A673 (cell line): ENCODE measurements at regions of chr1 and their contacts with region 1.

Region 1: GRCh38 chr1:43513436-43514173 is 17.1 kb upstream of the PTPRF start:
- DNase-seq: no peak
- H3K4me3 ChIP-seq: no peak overlapping the region
- H3K27ac ChIP-seq: no peak overlapping the region
- H3K4me1 ChIP-seq: no peaks in the 10 kb centered on the region
- H3K27me3 ChIP-seq: no peaks in the 10 kb centered on the region
- CTCF ChIP-seq: no peak

Region 2: DNA sequence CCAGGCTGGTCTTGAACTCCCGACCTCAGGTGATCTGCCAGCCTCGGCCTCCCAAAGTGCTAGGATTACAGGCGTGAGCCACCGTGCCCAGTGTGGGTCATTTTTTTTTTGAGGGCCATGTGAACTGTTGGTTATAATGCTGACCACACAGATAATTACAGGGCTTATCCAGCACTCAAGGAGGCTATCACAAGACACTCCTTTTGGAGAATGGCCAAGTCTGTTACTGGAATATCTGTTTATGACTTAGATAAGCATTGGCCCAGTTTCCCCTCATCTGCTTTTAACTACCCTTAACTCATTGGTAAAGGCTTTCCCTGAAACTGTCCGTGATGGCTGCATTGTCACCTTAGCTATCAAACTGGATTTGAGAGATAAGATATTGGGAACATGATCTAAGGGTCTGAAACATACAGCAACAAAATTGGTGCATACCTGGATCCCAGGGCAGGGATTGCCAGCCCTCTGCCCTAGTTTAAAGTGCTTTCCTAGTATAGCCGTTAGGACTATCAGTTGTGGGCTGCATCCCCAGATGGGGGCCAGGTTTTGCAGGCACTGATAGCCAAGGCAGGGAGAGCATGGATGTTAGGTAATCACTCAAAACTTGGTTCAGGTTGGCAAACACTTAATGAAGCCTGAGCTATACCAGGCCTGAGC is 108.3 kb before region 1 on chr1:
- CTCF ChIA-PET with region 1: no interaction called
- POLR2A ChIA-PET with region 1: no interaction called
- intact Hi-C with region 1: no loop called
- DNase-seq: no peak
- H3K4me3 ChIP-seq: no peak overlapping the region
- H3K27ac ChIP-seq: no peak overlapping the region
- H3K4me1 ChIP-seq: no peaks in the 10 kb centered on the region
- H3K27me3 ChIP-seq: no peaks in the 10 kb centered on the region
- CTCF ChIP-seq: no peak

Region 3: DNA sequence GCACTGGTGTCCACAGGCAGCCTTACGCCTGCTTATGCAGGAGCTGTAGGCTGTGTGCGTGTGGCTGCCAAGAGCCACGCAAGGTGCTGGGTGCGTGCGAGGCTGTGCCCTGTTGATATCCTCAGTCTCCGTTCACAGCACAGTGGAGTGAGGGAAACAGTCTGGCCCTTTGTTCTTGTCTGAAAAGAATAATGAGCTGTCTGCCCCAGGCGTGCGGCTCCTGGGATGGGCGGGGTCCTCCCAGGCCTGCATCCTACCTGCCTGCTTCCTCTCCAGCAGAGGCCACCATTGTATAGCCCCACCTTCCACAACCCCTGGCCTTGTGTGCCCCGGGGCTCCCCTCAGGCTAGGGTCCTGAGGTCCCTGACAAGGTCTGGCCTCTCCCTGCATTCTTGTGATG is 89.4 kb after region 1 on chr1:
- CTCF ChIA-PET with region 1: no interaction called
- POLR2A ChIA-PET with region 1: no interaction called
- intact Hi-C with region 1: no loop called
- DNase-seq: no peak
- H3K4me3 ChIP-seq: no peak overlapping the region
- H3K27ac ChIP-seq: no peak overlapping the region
- H3K4me1 ChIP-seq: no peaks in the 10 kb centered on the region
- H3K27me3 ChIP-seq: no peaks in the 10 kb centered on the region
- CTCF ChIP-seq: no peak

Region 4: GRCh38 chr1:43671626-43672330 is 158.2 kb after region 1 on chr1:
- CTCF ChIA-PET with region 1: no interaction called
- POLR2A ChIA-PET with region 1: interaction called, 15 read pairs
- intact Hi-C with region 1: no loop called
- DNase-seq: no peak
- H3K4me3 ChIP-seq: no peak overlapping the region
- H3K27ac ChIP-seq: no peak overlapping the region
- H3K4me1 ChIP-seq: no peaks in the 10 kb centered on the region
- H3K27me3 ChIP-seq: no peaks in the 10 kb centered on the region
- CTCF ChIP-seq: no peak

Region 5: GRCh38 chr1:44616991-44617702 is 1103.5 kb after region 1 on chr1:
- CTCF ChIA-PET with region 1: no interaction called
- POLR2A ChIA-PET with region 1: no interaction called
- intact Hi-C with region 1: no loop called
- DNase-seq: no peak
- H3K4me3 ChIP-seq: no peak overlapping the region
- H3K27ac ChIP-seq: no peak overlapping the region
- H3K4me1 ChIP-seq: no peaks in the 10 kb centered on the region
- H3K27me3 ChIP-seq: peaks cover 18% of the 10 kb centered on the region
- CTCF ChIP-seq: no peak